Activated CD8-positive, alpha-beta T cell treated with anti-CD3 and anti-CD28 coated beads for 36 hours (primary cell): ENCODE measurements at regions of chr1 and their contacts with region 1.

Region 1: DNA sequence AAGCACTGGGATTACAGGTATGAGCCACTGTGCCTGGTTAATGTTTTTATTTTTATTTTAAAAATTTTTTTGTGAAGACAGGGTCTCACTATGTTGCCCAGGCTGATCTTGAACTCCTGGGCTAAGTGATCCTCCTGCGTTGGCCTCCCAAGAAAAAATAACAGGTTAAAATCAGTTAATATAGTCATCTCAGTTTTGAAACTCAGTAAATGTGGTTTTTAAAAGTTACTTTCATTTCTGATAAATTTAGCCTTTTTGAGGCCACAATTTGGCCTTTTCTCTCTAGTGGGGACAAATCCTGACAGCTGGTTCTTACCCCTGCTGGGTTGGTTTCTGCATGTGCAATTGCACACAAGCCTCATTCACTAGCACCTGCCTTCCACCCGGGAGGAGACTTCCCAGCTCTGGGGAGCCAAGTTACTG is 13.3 kb downstream of the PMF1 start:
- DNase-seq: peak; percentile 51
- ATAC-seq: peak; percentile 3
- H3K4me3 Mint-ChIP-seq: no peak overlapping the region
- H3K27ac Mint-ChIP-seq: peak overlapping the region; percentile 92
- H3K4me1 Mint-ChIP-seq: peaks cover 55% of the 10 kb centered on the region
- H3K27me3 Mint-ChIP-seq: no peaks in the 10 kb centered on the region
- CTCF ChIP-seq: no peak

Region 2: GRCh38 chr1:156090822-156091188 is 135.3 kb before region 1 on chr1:
- CTCF ChIA-PET with region 1: interaction called, 43 read pairs
- POLR2A ChIA-PET with region 1: interaction called, 38 read pairs
- intact Hi-C with region 1: loop called (anchors 10 kb)
- DNase-seq: peak; percentile 94
- ATAC-seq: peak; percentile 98
- H3K4me3 Mint-ChIP-seq: no peak overlapping the region
- H3K27ac Mint-ChIP-seq: no peak overlapping the region
- H3K4me1 Mint-ChIP-seq: peaks cover 5% of the 10 kb centered on the region
- H3K27me3 Mint-ChIP-seq: peaks cover 26% of the 10 kb centered on the region
- CTCF ChIP-seq: peak; percentile 87

Region 3: DNA sequence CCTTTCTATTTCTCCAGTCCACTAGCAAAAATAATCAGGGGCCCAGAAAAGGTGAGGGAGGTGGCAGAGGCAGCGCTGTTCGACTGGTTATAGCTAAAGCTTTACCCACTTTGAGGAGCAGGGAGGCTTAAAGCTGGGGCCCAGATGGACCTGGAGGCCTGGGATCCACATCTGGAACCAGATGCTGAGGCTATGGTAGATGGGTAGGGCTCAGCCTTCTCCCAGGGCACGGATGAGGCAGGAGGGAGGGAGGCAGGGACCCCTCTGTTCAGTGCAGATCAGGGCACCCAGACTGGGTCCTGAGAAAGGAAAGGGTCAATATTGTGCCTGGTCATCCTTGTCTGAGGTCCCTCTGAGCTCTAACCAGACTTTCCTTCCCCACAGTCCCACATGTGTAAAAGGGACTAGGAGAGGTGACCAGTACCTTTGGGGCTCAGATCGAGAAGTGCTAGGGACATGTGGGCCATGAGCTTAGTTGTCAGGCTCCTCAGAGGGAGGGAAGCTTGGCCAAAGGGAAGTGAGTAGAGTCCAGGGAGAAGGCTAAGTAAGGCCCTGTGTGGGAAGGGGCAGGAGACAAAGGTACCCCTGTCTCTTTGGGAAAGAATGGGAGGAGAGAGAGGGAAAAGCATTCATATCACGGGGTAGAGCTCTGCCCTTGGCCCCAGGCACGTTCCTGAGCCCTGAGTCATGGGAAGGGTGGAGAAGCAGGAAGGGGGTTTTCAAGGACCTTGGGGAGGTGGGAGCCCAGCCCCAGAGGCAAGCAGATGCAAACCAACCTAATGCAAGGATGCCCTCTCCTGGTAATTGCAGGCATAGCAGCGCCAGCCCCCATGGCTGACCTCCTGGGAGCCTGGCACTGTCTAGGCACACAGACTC is 96.2 kb before region 1 on chr1:
- CTCF ChIA-PET with region 1: interaction called, 50 read pairs
- POLR2A ChIA-PET with region 1: interaction called, 4 read pairs
- intact Hi-C with region 1: no loop called
- DNase-seq: peak; percentile 89
- ATAC-seq: peak; percentile 50
- H3K4me3 Mint-ChIP-seq: no peak overlapping the region
- H3K27ac Mint-ChIP-seq: peak overlapping the region; percentile 63
- H3K4me1 Mint-ChIP-seq: peaks cover 50% of the 10 kb centered on the region
- H3K27me3 Mint-ChIP-seq: peaks cover 3% of the 10 kb centered on the region
- CTCF ChIP-seq: peak; percentile 98

Region 4: GRCh38 chr1:156154317-156154749 is 71.8 kb before region 1 on chr1:
- CTCF ChIA-PET with region 1: interaction called, 269 read pairs
- POLR2A ChIA-PET with region 1: interaction called, 60 read pairs
- intact Hi-C with region 1: no loop called
- DNase-seq: peak; percentile 81
- ATAC-seq: peak; percentile 87
- H3K4me3 Mint-ChIP-seq: peak overlapping the region; percentile 83
- H3K27ac Mint-ChIP-seq: peak overlapping the region; percentile 78
- H3K4me1 Mint-ChIP-seq: peaks cover 85% of the 10 kb centered on the region
- H3K27me3 Mint-ChIP-seq: no peaks in the 10 kb centered on the region
- CTCF ChIP-seq: no peak

Region 5: GRCh38 chr1:156193488-156194299 is 32.4 kb before region 1 on chr1 and contains the start of gene SLC25A44:
- CTCF ChIA-PET with region 1: interaction called, 57 read pairs
- POLR2A ChIA-PET with region 1: interaction called, 66 read pairs
- intact Hi-C with region 1: no loop called
- DNase-seq: peak; percentile 98
- ATAC-seq: peak; percentile 95
- H3K4me3 Mint-ChIP-seq: no peak within 1 kb of the TSS
- H3K27ac Mint-ChIP-seq: peak within 1 kb of the TSS; percentile 97
- H3K4me1 Mint-ChIP-seq: peaks cover 57% of the 10 kb centered on the region
- H3K27me3 Mint-ChIP-seq: no peaks in the 10 kb centered on the region
- CTCF ChIP-seq: no peak
- total RNA-seq, gene SLC25A44: 41.9 to 43.0 TPM

Region 6: GRCh38 chr1:156212833-156213643 is 13.1 kb before region 1 on chr1 and contains the start of gene PMF1:
- CTCF ChIA-PET with region 1: interaction called, 61 read pairs
- POLR2A ChIA-PET with region 1: interaction called, 88 read pairs
- intact Hi-C with region 1: no loop called
- DNase-seq: peak; percentile 99
- ATAC-seq: peak; percentile 92
- H3K4me3 Mint-ChIP-seq: peak within 1 kb of the TSS; percentile 96
- H3K27ac Mint-ChIP-seq: peak within 1 kb of the TSS; percentile 98
- H3K4me1 Mint-ChIP-seq: peaks cover 38% of the 10 kb centered on the region
- H3K27me3 Mint-ChIP-seq: no peaks in the 10 kb centered on the region
- CTCF ChIP-seq: no peak
- total RNA-seq, gene PMF1: 89.4 to 93.7 TPM